Activated CD4-positive, alpha-beta T cell treated with anti-CD3 and anti-CD28 coated beads, Interleukin-2, amount 10 ng/mL, durations not matched to agents 7 days and 5 days (primary cell): ENCODE measurements at regions of chr6 and their contacts with region 1.

Region 1: GRCh38 chr6:36094753-36095496 is 35.4 kb upstream of the MAPK13 start:
- DNase-seq: peak; percentile 85
- H3K4me3 Mint-ChIP-seq: no peak overlapping the region
- H3K27ac Mint-ChIP-seq: peak overlapping the region; percentile 47
- H3K4me1 Mint-ChIP-seq: peaks cover 31% of the 10 kb centered on the region
- H3K27me3 Mint-ChIP-seq: no peaks in the 10 kb centered on the region

Region 2: DNA sequence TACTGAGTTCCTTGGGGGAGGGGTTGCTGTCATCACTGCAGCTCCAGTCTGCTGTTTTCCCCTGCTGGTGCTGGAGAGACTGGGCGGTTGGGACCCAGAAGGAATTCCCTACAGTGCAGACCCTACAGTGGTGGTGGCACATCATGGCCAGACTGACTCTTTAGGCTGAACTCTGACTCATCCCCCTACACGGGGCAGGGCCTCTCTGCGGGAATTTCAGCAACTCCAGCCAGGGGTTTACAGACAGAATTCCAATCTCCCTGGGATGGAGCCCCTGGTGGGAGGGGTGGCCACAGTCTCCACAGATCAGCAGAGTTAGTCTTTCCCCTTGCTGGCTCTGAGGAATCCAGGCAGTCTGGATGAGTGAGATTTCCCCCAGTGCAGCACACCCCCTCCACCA is 11.5 kb before region 1 on chr6:
- CTCF ChIA-PET with region 1: interaction called, 15 read pairs
- POLR2A ChIA-PET with region 1: no interaction called
- DNase-seq: no peak
- H3K4me3 Mint-ChIP-seq: no peak overlapping the region
- H3K27ac Mint-ChIP-seq: no peak overlapping the region
- H3K4me1 Mint-ChIP-seq: peaks cover 2% of the 10 kb centered on the region
- H3K27me3 Mint-ChIP-seq: no peaks in the 10 kb centered on the region